CD8-positive, alpha-beta T cell (primary cell): ENCODE measurements at regions of chrX and their contacts with region 1.

Region 1: GRCh38 chrX:119482481-119483480 is 14.5 kb downstream of the SLC25A5 start:
- DNase-seq: peak; percentile 24 to 77 (median 59)
- ATAC-seq: peak; percentile 88
- H3K4me3 ChIP-seq: peak overlapping the region; percentile 17 to 52
- H3K4me3 Mint-ChIP-seq: peak overlapping the region; percentile 83
- H3K27ac ChIP-seq: peak overlapping the region in 1 of 2 experiments; percentile 14
- H3K27ac Mint-ChIP-seq: peak overlapping the region; percentile 45
- H3K4me1 ChIP-seq: peaks cover 5% of the 10 kb centered on the region
- H3K4me1 Mint-ChIP-seq: peaks cover 10% of the 10 kb centered on the region
- H3K27me3 ChIP-seq: no peaks in the 10 kb centered on the region
- H3K27me3 Mint-ChIP-seq: no peaks in the 10 kb centered on the region
- CTCF ChIP-seq: peak; percentile 61

Region 2: DNA sequence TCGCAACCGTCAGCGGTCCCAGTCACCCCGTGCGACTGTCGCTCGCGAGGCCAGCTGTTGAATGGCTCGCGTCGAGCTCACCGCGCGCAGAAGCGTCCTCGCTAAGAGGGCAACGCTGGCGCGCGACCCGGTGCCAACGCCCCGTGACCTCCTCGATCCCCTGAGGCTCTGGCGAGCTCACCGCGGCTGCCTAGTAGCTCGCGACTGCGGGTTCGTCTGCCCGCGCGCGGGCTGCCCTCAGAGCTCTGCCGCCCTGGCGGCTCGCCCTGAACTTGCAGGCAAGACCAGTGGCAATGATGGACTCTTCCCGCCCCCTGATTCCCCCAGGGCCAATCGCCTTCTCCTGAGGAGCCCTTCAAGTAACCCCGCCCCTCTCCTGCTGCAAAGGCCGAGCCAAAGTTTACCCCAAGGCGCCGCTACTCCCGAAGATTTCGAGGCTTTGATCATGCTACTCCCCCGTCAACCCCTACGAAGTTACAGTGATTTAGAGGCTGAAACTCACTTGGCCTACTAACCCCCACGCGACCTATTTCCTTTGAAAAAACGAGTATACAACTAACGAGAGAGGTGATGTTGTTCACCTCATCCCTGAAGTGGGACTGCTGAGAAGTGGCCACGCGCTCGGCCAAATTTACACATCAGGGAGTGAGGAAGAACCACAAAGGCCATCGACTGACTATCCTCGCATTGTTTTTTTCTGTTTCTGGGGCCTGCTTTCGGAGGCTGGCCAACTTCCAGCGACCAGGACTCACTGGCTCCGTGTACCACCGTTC is 209.2 kb before region 1 on chrX:
- CTCF ChIA-PET with region 1: no interaction called
- POLR2A ChIA-PET with region 1: no interaction called
- intact Hi-C with region 1: no loop called
- DNase-seq: peak in 8 of 9 experiments; percentile 0 to 70 (median 45)
- ATAC-seq: peak; percentile 95
- H3K4me3 ChIP-seq: peak overlapping the region; percentile 16 to 22
- H3K4me3 Mint-ChIP-seq: peak overlapping the region; percentile 77
- H3K27ac ChIP-seq: no peak overlapping the region
- H3K27ac Mint-ChIP-seq: no peak overlapping the region
- H3K4me1 ChIP-seq: no peaks in the 10 kb centered on the region
- H3K4me1 Mint-ChIP-seq: peaks cover 8% of the 10 kb centered on the region
- H3K27me3 ChIP-seq: peaks cover 0 to 2% of the 10 kb centered on the region in 2 experiments
- H3K27me3 Mint-ChIP-seq: peaks cover 11% of the 10 kb centered on the region
- CTCF ChIP-seq: no peak

Region 3: GRCh38 chrX:119495734-119496726 is 13.2 kb after region 1 on chrX:
- CTCF ChIA-PET with region 1: interaction called, 16 read pairs
- POLR2A ChIA-PET with region 1: interaction called, 5 read pairs
- intact Hi-C with region 1: no loop called
- DNase-seq: peak in 1 of 9 experiments; percentile 22
- ATAC-seq: peak; percentile 36
- H3K4me3 ChIP-seq: no peak overlapping the region
- H3K4me3 Mint-ChIP-seq: no peak overlapping the region
- H3K27ac ChIP-seq: no peak overlapping the region
- H3K27ac Mint-ChIP-seq: peak overlapping the region; percentile 57
- H3K4me1 ChIP-seq: peaks cover 2% of the 10 kb centered on the region
- H3K4me1 Mint-ChIP-seq: peaks cover 11% of the 10 kb centered on the region
- H3K27me3 ChIP-seq: no peaks in the 10 kb centered on the region
- H3K27me3 Mint-ChIP-seq: no peaks in the 10 kb centered on the region
- CTCF ChIP-seq: no peak

Region 4: GRCh38 chrX:119617517-119618164 is 134.9 kb after region 1 on chrX:
- CTCF ChIA-PET with region 1: no interaction called
- POLR2A ChIA-PET with region 1: no interaction called
- intact Hi-C with region 1: loop called in 1 of 2 experiments (anchors 10 kb)
- DNase-seq: no peak
- ATAC-seq: no peak
- H3K4me3 ChIP-seq: no peak overlapping the region
- H3K4me3 Mint-ChIP-seq: no peak overlapping the region
- H3K27ac ChIP-seq: no peak overlapping the region
- H3K27ac Mint-ChIP-seq: no peak overlapping the region
- H3K4me1 ChIP-seq: no peaks in the 10 kb centered on the region
- H3K4me1 Mint-ChIP-seq: peaks cover 13% of the 10 kb centered on the region
- H3K27me3 ChIP-seq: no peaks in the 10 kb centered on the region
- H3K27me3 Mint-ChIP-seq: no peaks in the 10 kb centered on the region
- CTCF ChIP-seq: no peak